ENCODE measurements at regions of chr1 and their contacts with region 1.

Region 1: DNA sequence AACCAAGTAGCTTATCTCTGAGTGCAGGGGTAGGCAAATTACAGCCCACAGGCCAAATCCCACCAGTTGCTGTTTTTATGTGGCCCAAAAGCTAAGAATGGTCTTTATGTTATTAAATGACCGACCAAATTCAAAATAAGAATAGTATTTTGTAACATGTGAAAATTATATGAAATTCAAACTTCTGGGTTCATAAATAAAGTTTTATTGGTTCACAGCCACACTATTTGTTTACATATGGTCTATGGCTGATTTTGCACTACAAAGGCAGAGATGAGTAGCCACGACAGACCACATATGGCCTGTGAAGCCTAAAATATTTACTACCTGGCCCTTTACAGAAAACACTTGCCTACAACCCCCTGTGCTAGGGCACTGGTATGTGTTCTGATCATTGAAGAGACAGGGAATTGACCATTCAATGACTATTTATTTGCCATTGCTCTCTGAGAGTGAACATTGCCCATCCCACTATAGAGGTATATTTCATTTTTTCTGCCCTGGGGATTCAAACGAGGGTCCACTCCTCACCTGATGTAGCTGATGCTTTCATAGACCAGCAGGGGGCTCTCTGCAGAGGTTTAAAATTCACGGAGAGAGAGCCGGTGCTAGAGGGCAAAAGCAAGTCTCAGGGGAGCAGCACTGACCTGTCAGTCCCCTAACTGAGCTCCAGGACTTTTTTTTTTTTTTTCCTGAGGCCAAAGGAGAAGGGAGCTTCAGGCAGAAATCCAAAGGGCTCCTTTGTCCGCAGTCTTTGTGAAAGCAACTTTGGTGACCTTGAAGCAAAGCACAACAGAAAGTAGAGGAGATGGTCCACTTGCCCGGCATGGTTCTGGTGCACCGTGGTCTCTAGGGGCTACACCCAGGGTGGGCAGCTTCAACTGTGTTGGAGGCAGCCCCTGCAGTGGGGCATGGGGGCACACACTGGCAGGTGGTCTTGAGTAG is 7.3 kb upstream of the GNL2 start:
- DNase-seq: peak; percentile 60
- H3K4me3 Mint-ChIP-seq: no peak overlapping the region
- H3K27ac Mint-ChIP-seq: no peak overlapping the region
- H3K4me1 Mint-ChIP-seq: no peaks in the 10 kb centered on the region
- H3K27me3 Mint-ChIP-seq: no peaks in the 10 kb centered on the region
- CTCF ChIP-seq: peak; percentile 64

Region 2: DNA sequence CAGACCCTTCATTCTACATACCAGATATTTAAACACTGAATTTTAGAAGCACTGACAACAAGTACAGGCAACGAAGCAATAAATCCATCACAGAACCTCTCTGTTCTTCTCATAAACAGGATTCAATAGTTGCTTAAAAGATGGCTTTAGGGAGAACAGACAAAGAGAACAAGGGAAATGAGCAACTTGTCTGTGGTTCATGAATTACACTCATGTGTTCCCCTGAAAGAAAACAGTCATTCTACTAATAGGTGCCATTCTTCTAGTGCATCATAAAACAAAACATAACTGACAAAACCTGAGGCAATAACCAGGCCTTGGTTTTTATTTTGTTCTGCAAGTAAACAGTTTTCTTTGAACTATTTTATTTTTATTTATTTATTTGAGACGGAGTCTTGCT is 14.1 kb before region 1 on chr1:
- CTCF ChIA-PET with region 1: interaction called, 12 read pairs
- POLR2A ChIA-PET with region 1: interaction called, 3 read pairs
- intact Hi-C with region 1: no loop called
- DNase-seq: no peak
- H3K4me3 Mint-ChIP-seq: no peak overlapping the region
- H3K27ac Mint-ChIP-seq: no peak overlapping the region
- H3K4me1 Mint-ChIP-seq: no peaks in the 10 kb centered on the region
- H3K27me3 Mint-ChIP-seq: no peaks in the 10 kb centered on the region
- CTCF ChIP-seq: no peak

Region 3: GRCh38 chr1:37616330-37616729 is 13.3 kb after region 1 on chr1:
- CTCF ChIA-PET with region 1: interaction called, 19 read pairs
- POLR2A ChIA-PET with region 1: no interaction called
- intact Hi-C with region 1: no loop called
- DNase-seq: no peak
- H3K4me3 Mint-ChIP-seq: no peak overlapping the region
- H3K27ac Mint-ChIP-seq: no peak overlapping the region
- H3K4me1 Mint-ChIP-seq: no peaks in the 10 kb centered on the region
- H3K27me3 Mint-ChIP-seq: peaks cover 46% of the 10 kb centered on the region
- CTCF ChIP-seq: no peak

Region 4: GRCh38 chr1:37622131-37622530 is 19.1 kb after region 1 on chr1:
- CTCF ChIA-PET with region 1: interaction called, 19 read pairs
- POLR2A ChIA-PET with region 1: no interaction called
- intact Hi-C with region 1: no loop called
- DNase-seq: no peak
- H3K4me3 Mint-ChIP-seq: no peak overlapping the region
- H3K27ac Mint-ChIP-seq: no peak overlapping the region
- H3K4me1 Mint-ChIP-seq: no peaks in the 10 kb centered on the region
- H3K27me3 Mint-ChIP-seq: peaks cover 55% of the 10 kb centered on the region
- CTCF ChIP-seq: no peak

Region 5: DNA sequence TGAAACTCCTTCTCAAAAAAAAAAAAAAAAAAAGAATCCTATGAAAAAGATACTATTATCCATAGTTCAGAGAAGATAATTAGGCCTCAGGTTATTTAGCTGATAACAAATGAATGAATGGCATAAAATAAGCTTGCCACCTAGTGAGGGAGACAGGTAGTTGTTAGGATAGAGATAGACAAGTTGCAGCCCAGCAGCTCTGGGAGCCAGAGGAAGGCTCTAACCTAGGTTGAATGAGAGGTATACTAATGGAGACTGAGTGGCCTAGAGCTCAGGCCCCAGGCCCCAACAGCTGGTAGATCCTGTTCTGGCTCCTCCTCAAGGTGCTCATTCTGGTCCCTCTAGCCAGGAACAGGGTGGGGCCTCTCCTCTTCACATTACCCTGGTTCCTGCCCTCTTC is 52.3 kb after region 1 on chr1:
- CTCF ChIA-PET with region 1: interaction called, 16 read pairs
- POLR2A ChIA-PET with region 1: no interaction called
- intact Hi-C with region 1: no loop called
- DNase-seq: no peak
- H3K4me3 Mint-ChIP-seq: no peak overlapping the region
- H3K27ac Mint-ChIP-seq: no peak overlapping the region
- H3K4me1 Mint-ChIP-seq: no peaks in the 10 kb centered on the region
- H3K27me3 Mint-ChIP-seq: no peaks in the 10 kb centered on the region
- CTCF ChIP-seq: no peak

Region 6: GRCh38 chr1:37676281-37677243 is 73.5 kb after region 1 on chr1:
- CTCF ChIA-PET with region 1: interaction called, 271 read pairs
- POLR2A ChIA-PET with region 1: interaction called, 3 read pairs
- intact Hi-C with region 1: no loop called
- DNase-seq: no peak
- H3K4me3 Mint-ChIP-seq: no peak overlapping the region
- H3K27ac Mint-ChIP-seq: no peak overlapping the region
- H3K4me1 Mint-ChIP-seq: no peaks in the 10 kb centered on the region
- H3K27me3 Mint-ChIP-seq: peaks cover 6% of the 10 kb centered on the region
- CTCF ChIP-seq: no peak

Region 7: GRCh38 chr1:37958690-37959089 is 355.7 kb after region 1 on chr1:
- CTCF ChIA-PET with region 1: no interaction called
- POLR2A ChIA-PET with region 1: no interaction called
- intact Hi-C with region 1: no loop called
- DNase-seq: no peak
- H3K4me3 Mint-ChIP-seq: no peak overlapping the region
- H3K27ac Mint-ChIP-seq: no peak overlapping the region
- H3K4me1 Mint-ChIP-seq: no peaks in the 10 kb centered on the region
- H3K27me3 Mint-ChIP-seq: no peaks in the 10 kb centered on the region
- CTCF ChIP-seq: no peak

Region 8: DNA sequence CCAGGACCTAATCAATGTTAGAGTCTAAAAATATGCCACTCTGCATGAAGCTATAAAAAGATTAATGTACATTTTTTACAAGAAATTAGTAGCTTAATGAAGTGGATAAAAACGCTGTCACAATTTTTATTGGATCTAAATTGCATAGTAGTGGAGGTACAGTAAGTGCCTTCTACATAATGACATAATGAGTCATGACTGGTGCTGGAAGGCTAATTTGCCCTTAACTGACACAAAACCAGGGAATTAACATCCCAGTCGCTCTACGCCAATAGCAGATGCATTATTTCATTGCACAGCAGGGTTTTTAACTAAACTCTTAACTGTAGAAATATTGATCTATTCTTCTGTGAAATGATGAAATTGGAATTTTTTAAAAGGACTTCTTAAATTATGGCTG is 1223.2 kb after region 1 on chr1:
- CTCF ChIA-PET with region 1: no interaction called
- POLR2A ChIA-PET with region 1: no interaction called
- intact Hi-C with region 1: loop called (anchors 10 kb)
- DNase-seq: peak; percentile 13
- H3K4me3 Mint-ChIP-seq: no peak overlapping the region
- H3K27ac Mint-ChIP-seq: no peak overlapping the region
- H3K4me1 Mint-ChIP-seq: peaks cover 4% of the 10 kb centered on the region
- H3K27me3 Mint-ChIP-seq: peaks cover 27% of the 10 kb centered on the region
- CTCF ChIP-seq: no peak